Activated naive CD4-positive, alpha-beta T cell treated with anti-CD3 and anti-CD28 coated beads for 36 hours (primary cell): ENCODE measurements at regions of chr5 and their contacts with region 1.

Region 1: DNA sequence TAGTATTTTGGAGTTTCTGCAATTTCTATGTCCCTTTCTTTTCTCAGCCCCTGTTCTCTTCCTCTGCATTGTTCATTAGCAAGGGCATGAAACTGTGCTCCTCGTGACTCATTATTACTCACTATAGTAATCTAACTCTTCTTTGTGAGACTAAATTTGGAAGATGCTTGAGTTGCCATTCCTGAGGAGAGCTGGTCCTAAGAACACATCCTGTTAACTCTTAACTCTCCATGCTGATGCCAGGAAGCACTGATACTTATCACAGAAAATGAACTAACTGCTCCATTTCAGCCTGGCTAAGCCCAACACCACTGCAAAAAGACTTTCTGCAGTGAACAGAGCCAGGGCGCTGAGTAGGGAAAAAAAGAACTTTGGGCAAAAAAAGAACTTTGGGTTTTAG is 10.6 kb upstream of the CSNK1A1 start:
- DNase-seq: peak; percentile 20
- H3K4me3 Mint-ChIP-seq: no peak overlapping the region
- H3K27ac Mint-ChIP-seq: peak overlapping the region; percentile 70
- H3K4me1 Mint-ChIP-seq: peaks cover 32% of the 10 kb centered on the region
- H3K27me3 Mint-ChIP-seq: no peaks in the 10 kb centered on the region

Region 2: GRCh38 chr5:149298842-149299404 is 262.9 kb before region 1 on chr5:
- CTCF ChIA-PET with region 1: no interaction called
- intact Hi-C with region 1: no loop called
- DNase-seq: no peak
- H3K4me3 Mint-ChIP-seq: no peak overlapping the region
- H3K27ac Mint-ChIP-seq: no peak overlapping the region
- H3K4me1 Mint-ChIP-seq: peaks cover 55% of the 10 kb centered on the region
- H3K27me3 Mint-ChIP-seq: no peaks in the 10 kb centered on the region

Region 3: GRCh38 chr5:149317281-149318048 is 244.4 kb before region 1 on chr5:
- CTCF ChIA-PET with region 1: interaction called, 4 read pairs
- intact Hi-C with region 1: loop called (anchors 1 kb)
- DNase-seq: peak; percentile 58
- H3K4me3 Mint-ChIP-seq: no peak overlapping the region
- H3K27ac Mint-ChIP-seq: no peak overlapping the region
- H3K4me1 Mint-ChIP-seq: no peaks in the 10 kb centered on the region
- H3K27me3 Mint-ChIP-seq: no peaks in the 10 kb centered on the region

Region 4: GRCh38 chr5:149442563-149443182 is 119.2 kb before region 1 on chr5:
- CTCF ChIA-PET with region 1: interaction called, 149 read pairs
- intact Hi-C with region 1: loop called (anchors 1 kb)
- DNase-seq: peak; percentile 82
- H3K4me3 Mint-ChIP-seq: no peak overlapping the region
- H3K27ac Mint-ChIP-seq: no peak overlapping the region
- H3K4me1 Mint-ChIP-seq: peaks cover 18% of the 10 kb centered on the region
- H3K27me3 Mint-ChIP-seq: no peaks in the 10 kb centered on the region

Region 5: GRCh38 chr5:149448831-149449714 is 112.8 kb before region 1 on chr5:
- CTCF ChIA-PET with region 1: interaction called, 149 read pairs
- intact Hi-C with region 1: loop called (anchors 1 kb)
- DNase-seq: peak; percentile 57
- H3K4me3 Mint-ChIP-seq: no peak overlapping the region
- H3K27ac Mint-ChIP-seq: no peak overlapping the region
- H3K4me1 Mint-ChIP-seq: no peaks in the 10 kb centered on the region
- H3K27me3 Mint-ChIP-seq: no peaks in the 10 kb centered on the region

Region 6: DNA sequence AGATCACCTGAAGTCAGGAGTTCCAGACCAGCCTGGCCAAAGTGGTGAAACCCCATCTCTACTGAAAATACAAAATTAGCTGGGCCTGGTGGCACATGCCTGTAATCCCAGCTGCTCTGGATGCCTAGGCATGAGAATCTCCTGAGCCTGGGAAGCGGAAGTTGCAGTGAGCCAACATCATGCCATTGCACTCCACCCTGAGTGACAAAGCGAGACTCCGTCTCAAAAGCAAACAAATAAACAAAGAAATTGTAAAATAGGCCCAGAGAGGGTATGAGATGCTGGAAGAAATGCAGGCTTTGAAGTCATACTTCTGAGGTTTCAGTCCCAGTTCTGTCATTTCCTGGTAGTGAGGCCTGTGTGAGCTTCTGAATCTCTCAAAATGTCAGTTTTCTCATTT is 14.2 kb after region 1 on chr5:
- CTCF ChIA-PET with region 1: interaction called, 31 read pairs
- intact Hi-C with region 1: no loop called
- DNase-seq: peak; percentile 66
- H3K4me3 Mint-ChIP-seq: no peak overlapping the region
- H3K27ac Mint-ChIP-seq: peak overlapping the region; percentile 89
- H3K4me1 Mint-ChIP-seq: peaks cover 34% of the 10 kb centered on the region
- H3K27me3 Mint-ChIP-seq: no peaks in the 10 kb centered on the region